ENCODE measurements at regions of chr21 and their contacts with region 1.

Region 1: GRCh38 chr21:34630536-34631143 is 15.7 kb upstream of the RCAN1 start:
- DNase-seq: peak in 3 of 5 donors; percentile 43 to 48 (median 47)
- H3K4me3 ChIP-seq: no peak overlapping the region
- H3K4me3 Mint-ChIP-seq: no peak overlapping the region
- H3K27ac ChIP-seq: no peak overlapping the region
- H3K27ac Mint-ChIP-seq: no peak overlapping the region
- H3K4me1 ChIP-seq: no peaks in the 10 kb centered on the region
- H3K4me1 Mint-ChIP-seq: no peaks in the 10 kb centered on the region
- H3K27me3 ChIP-seq: peaks cover 3% of the 10 kb centered on the region
- H3K27me3 Mint-ChIP-seq: peaks cover 12 to 28% of the 10 kb centered on the region in 2 donors

Region 2: DNA sequence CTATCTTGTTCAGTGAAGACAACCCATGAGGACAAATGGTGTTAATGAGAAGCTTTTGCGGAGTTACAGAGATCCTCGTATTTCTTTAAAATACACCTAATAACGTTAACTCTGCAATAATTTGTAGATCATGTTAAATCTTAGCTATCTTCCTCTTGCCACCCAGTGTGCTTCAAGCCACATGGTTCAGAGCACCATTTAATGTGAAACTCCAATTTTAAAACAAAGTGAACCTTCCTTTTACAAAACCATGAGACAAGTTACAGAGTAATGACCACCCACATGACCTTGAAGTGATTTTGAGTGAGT is 268.6 kb before region 1 on chr21:
- CTCF ChIA-PET with region 1: interaction called, 11 read pairs
- POLR2A ChIA-PET with region 1: no interaction called
- DNase-seq: no peak
- H3K4me3 ChIP-seq: no peak overlapping the region
- H3K4me3 Mint-ChIP-seq: no peak overlapping the region
- H3K27ac ChIP-seq: no peak overlapping the region
- H3K27ac Mint-ChIP-seq: no peak overlapping the region
- H3K4me1 ChIP-seq: no peaks in the 10 kb centered on the region
- H3K4me1 Mint-ChIP-seq: peaks cover 3 to 7% (median 5%) of the 10 kb centered on the region in 3 donors
- H3K27me3 ChIP-seq: peaks cover 4% of the 10 kb centered on the region
- H3K27me3 Mint-ChIP-seq: peaks cover 12 to 26% of the 10 kb centered on the region in 2 donors

Region 3: GRCh38 chr21:34615487-34615814 is 15.2 kb before region 1 on chr21:
- CTCF ChIA-PET with region 1: interaction called, 10 read pairs
- POLR2A ChIA-PET with region 1: no interaction called
- DNase-seq: no peak
- H3K4me3 ChIP-seq: peak overlapping the region; percentile 81
- H3K4me3 Mint-ChIP-seq: peak overlapping the region; percentile 86 to 95 (median 92)
- H3K27ac ChIP-seq: peak overlapping the region; percentile 51
- H3K27ac Mint-ChIP-seq: peak overlapping the region; percentile 51 to 95 (median 92)
- H3K4me1 ChIP-seq: peaks cover 14% of the 10 kb centered on the region
- H3K4me1 Mint-ChIP-seq: peaks cover 14 to 36% (median 29%) of the 10 kb centered on the region in 3 donors
- H3K27me3 ChIP-seq: peaks cover 3% of the 10 kb centered on the region
- H3K27me3 Mint-ChIP-seq: no peaks in the 10 kb centered on the region

Region 4: DNA sequence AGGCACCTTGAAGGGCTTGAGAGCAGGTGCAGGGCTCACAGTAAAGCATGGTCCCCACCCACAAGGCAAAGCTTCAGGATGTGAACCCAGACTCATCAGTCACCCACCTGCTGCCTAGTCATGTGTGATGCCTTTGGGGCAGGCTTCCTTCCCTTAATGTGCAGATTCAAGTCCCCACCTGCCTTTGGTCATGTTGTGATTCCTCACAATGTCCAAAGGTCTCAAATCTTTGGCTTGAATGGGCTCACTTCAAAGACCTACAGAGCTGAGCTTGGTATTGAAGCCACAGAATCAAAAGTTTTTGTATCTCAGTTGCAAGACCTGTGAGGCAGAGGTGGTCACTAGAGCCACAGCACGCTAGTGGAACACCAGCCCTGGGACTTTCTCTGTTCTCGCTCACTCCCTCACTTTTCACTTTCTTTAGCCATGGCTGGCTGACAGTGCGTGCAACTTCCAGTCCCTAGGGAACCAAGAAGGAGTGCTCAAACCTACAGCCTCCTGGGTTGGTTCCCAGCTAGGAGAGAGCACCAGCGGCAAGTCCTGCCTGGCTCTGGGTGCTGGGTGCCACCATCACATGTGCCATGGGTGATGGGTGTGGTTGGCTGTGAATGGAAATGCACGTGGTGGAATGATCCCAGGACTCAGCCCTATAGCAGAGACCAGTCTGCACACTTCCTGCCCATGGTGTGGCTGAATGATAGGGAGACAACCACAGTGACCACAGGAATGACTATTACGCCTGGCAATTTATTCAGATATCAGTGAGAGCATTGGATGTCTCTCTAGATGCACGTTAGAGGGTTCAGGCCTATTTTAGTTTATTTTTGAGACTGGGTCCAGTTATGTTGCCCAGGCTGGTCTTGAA is 11.8 kb after region 1 on chr21:
- CTCF ChIA-PET with region 1: interaction called, 14 read pairs
- POLR2A ChIA-PET with region 1: no interaction called
- DNase-seq: no peak
- H3K4me3 ChIP-seq: no peak overlapping the region
- H3K4me3 Mint-ChIP-seq: peak overlapping the region in 1 of 7 donors; percentile 25
- H3K27ac ChIP-seq: no peak overlapping the region
- H3K27ac Mint-ChIP-seq: peak overlapping the region in 1 of 8 donors; percentile 39
- H3K4me1 ChIP-seq: peaks cover 5% of the 10 kb centered on the region
- H3K4me1 Mint-ChIP-seq: peaks cover 16 to 24% (median 20%) of the 10 kb centered on the region in 3 donors
- H3K27me3 ChIP-seq: no peaks in the 10 kb centered on the region
- H3K27me3 Mint-ChIP-seq: peaks cover 0 to 4% of the 10 kb centered on the region in 2 donors

Region 5: GRCh38 chr21:34707876-34708325 is 77.3 kb after region 1 on chr21:
- CTCF ChIA-PET with region 1: no interaction called
- POLR2A ChIA-PET with region 1: no interaction called
- DNase-seq: peak in 2 of 5 donors; percentile 16 to 50
- H3K4me3 ChIP-seq: peak overlapping the region; percentile 2
- H3K4me3 Mint-ChIP-seq: peak overlapping the region in 6 of 7 donors; percentile 8 to 73 (median 55)
- H3K27ac ChIP-seq: no peak overlapping the region
- H3K27ac Mint-ChIP-seq: peak overlapping the region in 7 of 8 donors; percentile 24 to 83 (median 62)
- H3K4me1 ChIP-seq: peaks cover 16% of the 10 kb centered on the region
- H3K4me1 Mint-ChIP-seq: peaks cover 12 to 25% (median 17%) of the 10 kb centered on the region in 3 donors
- H3K27me3 ChIP-seq: no peaks in the 10 kb centered on the region
- H3K27me3 Mint-ChIP-seq: peaks cover 12 to 15% of the 10 kb centered on the region in 2 donors

Measured in CD8-positive, alpha-beta memory T cell (primary cell).